CD4-positive, alpha-beta memory T cell (primary cell): ENCODE measurements at regions of chr16 and their contacts with region 1.

Region 1: GRCh38 chr16:67660564-67661028 is at the start of gene PARD6A:
- DNase-seq: peak; percentile 94 to 97 (median 96)
- H3K4me3 ChIP-seq: peak within 1 kb of the TSS; percentile 98 to 100
- H3K4me3 Mint-ChIP-seq: peak within 1 kb of the TSS; percentile 93 to 98 (median 95)
- H3K27ac ChIP-seq: peak within 1 kb of the TSS; percentile 98
- H3K27ac Mint-ChIP-seq: peak within 1 kb of the TSS; percentile 97 to 99 (median 98)
- H3K4me1 ChIP-seq: peaks cover 27% of the 10 kb centered on the region
- H3K4me1 Mint-ChIP-seq: peaks cover 10 to 48% (median 20%) of the 10 kb centered on the region in 4 donors
- H3K27me3 ChIP-seq: no peaks in the 10 kb centered on the region
- H3K27me3 Mint-ChIP-seq: no peaks in the 10 kb centered on the region
- total RNA-seq, gene PARD6A: 7.4 to 8.8 TPM

Region 2: GRCh38 chr16:67480833-67481560 is 179.6 kb before region 1 on chr16 and contains the start of gene ATP6V0D1:
- CTCF ChIA-PET with region 1: interaction called, 7 read pairs
- POLR2A ChIA-PET with region 1: interaction called, 17 read pairs
- intact Hi-C with region 1: loop called (anchors 2 kb)
- DNase-seq: peak; percentile 97 to 99 (median 98)
- H3K4me3 ChIP-seq: peak within 1 kb of the TSS; percentile 97 to 99
- H3K4me3 Mint-ChIP-seq: peak within 1 kb of the TSS; percentile 94 to 100 (median 99)
- H3K27ac ChIP-seq: peak within 1 kb of the TSS; percentile 99
- H3K27ac Mint-ChIP-seq: peak within 1 kb of the TSS; percentile 97 to 100 (median 98)
- H3K4me1 ChIP-seq: peaks cover 43% of the 10 kb centered on the region
- H3K4me1 Mint-ChIP-seq: peaks cover 25 to 65% (median 44%) of the 10 kb centered on the region in 4 donors
- H3K27me3 ChIP-seq: no peaks in the 10 kb centered on the region
- H3K27me3 Mint-ChIP-seq: no peaks in the 10 kb centered on the region
- total RNA-seq, gene ATP6V0D1: 42.8 to 49.0 TPM

Region 3: DNA sequence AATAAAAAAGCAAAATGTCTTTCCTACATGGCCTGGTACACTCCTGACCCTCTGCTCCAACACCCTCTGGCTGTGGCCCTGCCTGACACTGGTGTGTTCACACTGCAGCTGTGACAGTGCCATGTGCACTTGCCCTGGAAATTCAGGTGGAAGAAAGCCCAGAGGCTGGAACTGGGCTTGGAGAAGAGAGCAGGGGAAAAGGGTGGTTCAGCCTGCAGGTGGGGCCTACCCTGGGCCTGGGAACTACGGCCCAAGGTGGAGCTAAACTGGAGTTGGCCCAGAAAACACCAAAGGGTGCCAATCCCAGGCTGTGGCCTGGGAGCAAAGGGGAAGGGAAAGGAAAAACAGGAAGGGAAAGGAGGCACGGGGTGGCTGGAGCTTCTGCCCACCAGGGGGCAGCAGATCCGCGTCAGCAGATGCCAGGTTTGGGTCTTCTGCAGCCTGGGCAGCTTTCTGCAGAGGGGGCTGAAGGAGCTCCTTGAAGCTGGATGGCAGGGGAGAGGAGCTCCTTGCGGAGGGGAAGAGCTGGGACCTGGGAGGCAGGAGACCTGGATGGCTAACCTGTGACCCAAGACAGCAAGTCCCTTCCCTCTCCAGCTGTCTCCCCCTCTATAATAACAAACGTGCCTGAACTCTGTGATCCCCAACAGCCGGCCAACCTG is 113.7 kb before region 1 on chr16:
- CTCF ChIA-PET with region 1: interaction called, 89 read pairs
- POLR2A ChIA-PET with region 1: interaction called, 37 read pairs
- intact Hi-C with region 1: loop called (anchors 2 kb)
- DNase-seq: peak; percentile 66 to 73 (median 69)
- H3K4me3 ChIP-seq: peak overlapping the region; percentile 41 to 48
- H3K4me3 Mint-ChIP-seq: peak overlapping the region; percentile 58 to 91 (median 82)
- H3K27ac ChIP-seq: peak overlapping the region; percentile 42
- H3K27ac Mint-ChIP-seq: peak overlapping the region; percentile 60 to 96 (median 95)
- H3K4me1 ChIP-seq: peaks cover 43% of the 10 kb centered on the region
- H3K4me1 Mint-ChIP-seq: peaks cover 29 to 65% (median 38%) of the 10 kb centered on the region in 4 donors
- H3K27me3 ChIP-seq: no peaks in the 10 kb centered on the region
- H3K27me3 Mint-ChIP-seq: no peaks in the 10 kb centered on the region

Region 4: DNA sequence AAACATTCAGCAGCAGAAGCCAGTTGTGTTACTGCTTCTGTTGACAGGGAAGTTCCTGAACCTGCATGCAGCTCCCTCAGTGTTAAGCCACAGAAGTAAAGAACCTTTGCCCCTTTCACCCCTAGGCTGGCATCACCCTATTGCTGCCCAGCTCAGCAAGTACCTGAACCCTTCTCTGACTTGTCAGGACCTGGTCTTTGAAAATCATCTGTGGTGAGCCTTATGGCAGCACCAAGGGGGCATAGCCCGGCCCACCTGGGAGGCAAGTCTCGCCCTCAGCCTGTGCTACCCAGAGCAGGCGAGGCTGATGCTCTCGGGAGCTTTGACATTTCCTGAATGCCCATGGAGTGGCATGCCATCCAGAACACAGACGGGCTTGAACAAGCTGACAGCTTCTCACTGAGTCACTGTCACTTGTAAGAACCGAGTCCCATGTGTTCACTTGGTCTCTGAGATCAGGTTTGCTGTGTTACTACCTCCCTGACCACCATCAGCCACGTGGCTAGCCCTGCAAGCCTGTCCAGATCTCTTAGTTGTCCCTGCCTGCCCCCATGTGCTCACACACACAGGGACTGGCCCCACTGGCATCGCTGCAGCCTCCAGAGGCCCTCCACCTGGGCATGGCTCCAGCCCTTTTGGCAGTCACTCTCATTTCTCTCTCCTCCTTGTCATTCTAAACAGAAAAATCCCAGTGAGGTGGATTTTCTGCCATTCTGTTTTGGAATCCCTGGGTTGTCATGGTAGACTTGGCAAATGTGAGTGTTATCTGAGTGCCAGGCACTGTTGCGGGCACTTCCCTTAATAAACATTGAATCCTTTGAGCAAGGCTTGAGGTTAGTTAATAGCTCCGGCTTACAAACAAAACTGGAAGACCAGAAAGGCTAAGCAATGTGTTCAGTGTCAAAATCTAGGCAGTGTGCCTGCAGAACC is 18.6 kb before region 1 on chr16:
- CTCF ChIA-PET with region 1: interaction called, 51 read pairs
- POLR2A ChIA-PET with region 1: interaction called, 164 read pairs
- intact Hi-C with region 1: loop called (anchors 2 kb)
- DNase-seq: no peak
- H3K4me3 ChIP-seq: no peak overlapping the region
- H3K4me3 Mint-ChIP-seq: no peak overlapping the region
- H3K27ac ChIP-seq: no peak overlapping the region
- H3K27ac Mint-ChIP-seq: peak overlapping the region in 1 of 7 donors; percentile 13
- H3K4me1 ChIP-seq: peaks cover 30% of the 10 kb centered on the region
- H3K4me1 Mint-ChIP-seq: peaks cover 2 to 28% (median 11%) of the 10 kb centered on the region in 4 donors
- H3K27me3 ChIP-seq: no peaks in the 10 kb centered on the region
- H3K27me3 Mint-ChIP-seq: no peaks in the 10 kb centered on the region

Region 5: GRCh38 chr16:67697422-67698185 is 37.0 kb after region 1 on chr16:
- CTCF ChIA-PET with region 1: no interaction called
- POLR2A ChIA-PET with region 1: no interaction called
- intact Hi-C with region 1: no loop called
- DNase-seq: no peak
- H3K4me3 ChIP-seq: no peak overlapping the region
- H3K4me3 Mint-ChIP-seq: no peak overlapping the region
- H3K27ac ChIP-seq: no peak overlapping the region
- H3K27ac Mint-ChIP-seq: peak overlapping the region in 1 of 7 donors; percentile 22
- H3K4me1 ChIP-seq: peaks cover 1% of the 10 kb centered on the region
- H3K4me1 Mint-ChIP-seq: peaks cover 5 to 10% (median 6%) of the 10 kb centered on the region in 4 donors
- H3K27me3 ChIP-seq: no peaks in the 10 kb centered on the region
- H3K27me3 Mint-ChIP-seq: no peaks in the 10 kb centered on the region

Region 6: GRCh38 chr16:67719048-67719777 is 58.6 kb after region 1 on chr16 and contains the start of gene GFOD2:
- CTCF ChIA-PET with region 1: interaction called, 5 read pairs
- POLR2A ChIA-PET with region 1: interaction called, 10 read pairs
- intact Hi-C with region 1: loop called (anchors 5 kb)
- DNase-seq: peak; percentile 95 to 99 (median 96)
- H3K4me3 ChIP-seq: peak within 1 kb of the TSS; percentile 69 to 81
- H3K4me3 Mint-ChIP-seq: peak within 1 kb of the TSS; percentile 94 to 99 (median 97)
- H3K27ac ChIP-seq: peak within 1 kb of the TSS; percentile 83
- H3K27ac Mint-ChIP-seq: peak within 1 kb of the TSS; percentile 89 to 100 (median 98)
- H3K4me1 ChIP-seq: peaks cover 27% of the 10 kb centered on the region
- H3K4me1 Mint-ChIP-seq: peaks cover 29 to 50% (median 40%) of the 10 kb centered on the region in 4 donors
- H3K27me3 ChIP-seq: no peaks in the 10 kb centered on the region
- H3K27me3 Mint-ChIP-seq: no peaks in the 10 kb centered on the region
- total RNA-seq, gene GFOD2: 18.0 to 19.8 TPM

Region 7: DNA sequence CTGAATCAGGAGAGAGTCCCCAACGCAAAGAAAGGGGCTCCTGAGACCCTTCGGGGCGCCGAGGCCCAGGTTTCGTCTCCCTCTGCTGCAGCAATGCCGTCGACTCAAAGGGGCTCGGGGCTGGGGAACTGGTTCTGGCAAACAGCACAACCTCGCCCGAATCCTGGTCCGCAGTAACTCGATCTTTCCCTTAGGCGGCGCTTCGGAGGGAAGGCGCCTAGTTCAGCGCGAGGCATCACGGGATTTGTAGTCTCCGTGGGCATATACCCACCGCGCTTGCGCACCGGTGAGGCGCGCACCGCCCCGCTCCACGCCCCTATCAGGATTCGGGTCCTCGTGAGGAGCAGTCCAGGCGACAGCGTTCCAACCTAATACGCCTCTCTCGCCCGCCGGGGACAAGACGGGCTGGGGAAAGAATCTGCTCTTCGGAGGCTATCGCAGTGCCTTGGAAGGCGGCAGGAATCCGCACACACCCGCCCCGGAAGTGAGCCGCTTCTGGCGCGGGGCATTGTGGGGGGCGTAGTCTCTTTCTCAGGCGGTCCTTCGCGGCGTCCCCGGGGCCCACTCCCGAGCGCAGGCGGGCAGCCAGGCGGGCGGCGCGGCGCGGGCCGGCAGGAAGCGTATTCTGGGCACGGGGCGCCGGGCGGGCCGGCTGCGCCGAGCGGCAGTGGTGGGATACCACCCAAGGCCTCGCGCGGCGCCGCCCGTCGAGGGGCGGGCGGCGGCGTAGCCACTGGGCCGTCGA is 181.3 kb after region 1 on chr16 and contains the start of gene THAP11:
- CTCF ChIA-PET with region 1: interaction called, 3 read pairs
- POLR2A ChIA-PET with region 1: interaction called, 7 read pairs
- intact Hi-C with region 1: loop called (anchors 1 kb)
- DNase-seq: peak; percentile 94 to 98 (median 95)
- H3K4me3 ChIP-seq: peak within 1 kb of the TSS; percentile 74 to 99
- H3K4me3 Mint-ChIP-seq: peak within 1 kb of the TSS; percentile 93 to 98 (median 96)
- H3K27ac ChIP-seq: peak within 1 kb of the TSS; percentile 98
- H3K27ac Mint-ChIP-seq: peak within 1 kb of the TSS; percentile 97 to 99 (median 98)
- H3K4me1 ChIP-seq: peaks cover 38% of the 10 kb centered on the region
- H3K4me1 Mint-ChIP-seq: peaks cover 25 to 48% (median 36%) of the 10 kb centered on the region in 4 donors
- H3K27me3 ChIP-seq: no peaks in the 10 kb centered on the region
- H3K27me3 Mint-ChIP-seq: no peaks in the 10 kb centered on the region
- total RNA-seq, gene THAP11: 56.8 to 58.4 TPM